T-cell (primary cell): ENCODE measurements at regions of chr3 and their contacts with region 1.

Region 1: GRCh38 chr3:43162230-43163084 is 56.6 kb upstream of the POMGNT2 start:
- DNase-seq: peak; percentile 44 to 78 (median 55)
- ATAC-seq: peak; percentile 89 to 95 (median 89)
- H3K4me3 ChIP-seq: peak overlapping the region in 1 of 2 donors; percentile 29
- H3K4me3 Mint-ChIP-seq: peak overlapping the region; percentile 57 to 79 (median 76)
- H3K27ac ChIP-seq: peak overlapping the region; percentile 93
- H3K27ac Mint-ChIP-seq: peak overlapping the region; percentile 98 to 99
- H3K4me1 ChIP-seq: peaks cover 18 to 28% of the 10 kb centered on the region in 2 experiments
- H3K4me1 Mint-ChIP-seq: peaks cover 29 to 35% (median 30%) of the 10 kb centered on the region in 3 donors
- H3K27me3 ChIP-seq: no peaks in the 10 kb centered on the region
- H3K27me3 Mint-ChIP-seq: no peaks in the 10 kb centered on the region

Region 2: DNA sequence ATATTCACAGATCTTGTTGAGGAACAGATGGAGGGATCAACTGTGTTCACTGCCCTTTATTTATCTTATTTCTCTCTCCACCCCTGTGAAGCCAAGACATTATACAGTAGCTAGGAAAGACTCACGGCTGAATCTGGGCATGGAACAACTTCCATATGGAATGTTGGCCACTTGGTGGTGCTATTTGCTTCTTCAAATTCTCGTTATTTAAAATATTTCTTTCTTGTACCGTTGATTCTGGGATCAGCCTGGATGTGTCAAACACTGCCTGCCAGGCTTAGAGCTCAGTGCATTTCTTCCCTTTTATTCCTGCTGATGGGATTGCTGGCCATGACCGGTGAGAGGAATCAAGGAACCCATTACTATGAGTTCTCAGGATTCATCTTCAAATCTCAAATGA is 200.8 kb before region 1 on chr3:
- CTCF ChIA-PET with region 1: interaction called, 3 to 11 read pairs
- POLR2A ChIA-PET with region 1: no interaction called
- DNase-seq: peak in 20 of 35 experiments; percentile 4 to 65 (median 15)
- ATAC-seq: peak in 1 of 4 experiments; percentile 32
- H3K4me3 ChIP-seq: no peak overlapping the region
- H3K4me3 Mint-ChIP-seq: no peak overlapping the region
- H3K27ac ChIP-seq: no peak overlapping the region
- H3K27ac Mint-ChIP-seq: no peak overlapping the region
- H3K4me1 ChIP-seq: peaks cover 4 to 24% of the 10 kb centered on the region in 2 experiments
- H3K4me1 Mint-ChIP-seq: peaks cover 28 to 31% (median 31%) of the 10 kb centered on the region in 3 donors
- H3K27me3 ChIP-seq: no peaks in the 10 kb centered on the region
- H3K27me3 Mint-ChIP-seq: peaks cover 0 to 6% of the 10 kb centered on the region in 2 donors

Region 3: GRCh38 chr3:43180027-43180426 is 17.6 kb after region 1 on chr3:
- CTCF ChIA-PET with region 1: interaction called, 6 to 24 read pairs
- POLR2A ChIA-PET with region 1: interaction called in 1 of 2 experiments, 4 read pairs
- DNase-seq: peak in 34 of 35 experiments; percentile 11 to 71 (median 34)
- ATAC-seq: peak; percentile 83 to 97 (median 88)
- H3K4me3 ChIP-seq: peak overlapping the region in 1 of 2 donors; percentile 40
- H3K4me3 Mint-ChIP-seq: peak overlapping the region; percentile 59 to 81 (median 66)
- H3K27ac ChIP-seq: peak overlapping the region; percentile 91
- H3K27ac Mint-ChIP-seq: peak overlapping the region; percentile 88 to 90
- H3K4me1 ChIP-seq: peaks cover 35 to 53% of the 10 kb centered on the region in 2 experiments
- H3K4me1 Mint-ChIP-seq: peaks cover 66 to 71% (median 69%) of the 10 kb centered on the region in 3 donors
- H3K27me3 ChIP-seq: no peaks in the 10 kb centered on the region
- H3K27me3 Mint-ChIP-seq: no peaks in the 10 kb centered on the region

Region 4: GRCh38 chr3:43223670-43224364 is 61.4 kb after region 1 on chr3:
- CTCF ChIA-PET with region 1: interaction called, 3 to 17 read pairs
- POLR2A ChIA-PET with region 1: no interaction called
- DNase-seq: peak in 1 of 35 experiments; percentile 52
- ATAC-seq: no peak
- H3K4me3 ChIP-seq: no peak overlapping the region
- H3K4me3 Mint-ChIP-seq: peak overlapping the region in 1 of 3 donors; percentile 57
- H3K27ac ChIP-seq: no peak overlapping the region
- H3K27ac Mint-ChIP-seq: peak overlapping the region; percentile 42 to 81
- H3K4me1 ChIP-seq: peaks cover 23 to 43% of the 10 kb centered on the region in 2 experiments
- H3K4me1 Mint-ChIP-seq: peaks cover 59 to 65% (median 60%) of the 10 kb centered on the region in 3 donors
- H3K27me3 ChIP-seq: no peaks in the 10 kb centered on the region
- H3K27me3 Mint-ChIP-seq: no peaks in the 10 kb centered on the region

Region 5: DNA sequence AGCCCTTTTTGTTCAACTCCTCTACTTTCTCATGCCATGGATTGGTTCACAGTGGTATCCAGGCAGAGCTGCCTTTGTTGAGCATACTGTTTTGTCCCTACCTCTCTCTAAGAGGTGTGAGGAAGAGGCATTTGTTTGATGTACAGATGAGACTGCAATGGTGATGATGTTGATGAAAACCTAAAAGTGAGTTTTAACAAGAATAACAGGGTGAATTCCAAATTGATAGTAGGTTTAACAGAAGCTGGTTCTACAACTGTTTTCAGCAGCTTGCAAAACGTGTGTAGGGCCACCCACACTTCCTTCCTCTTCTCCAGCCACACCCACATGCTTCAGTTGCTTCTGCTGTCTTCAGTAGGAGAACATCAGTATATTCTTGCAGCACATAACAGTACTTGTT is 134.1 kb after region 1 on chr3:
- CTCF ChIA-PET with region 1: interaction called in 1 of 2 experiments, 23 read pairs
- POLR2A ChIA-PET with region 1: interaction called in 1 of 2 experiments, 3 read pairs
- DNase-seq: peak in 34 of 35 experiments; percentile 33 to 91 (median 75)
- ATAC-seq: peak; percentile 90 to 97 (median 94)
- H3K4me3 ChIP-seq: peak overlapping the region in 1 of 2 donors; percentile 27
- H3K4me3 Mint-ChIP-seq: peak overlapping the region; percentile 80 to 91 (median 86)
- H3K27ac ChIP-seq: peak overlapping the region; percentile 88
- H3K27ac Mint-ChIP-seq: peak overlapping the region; percentile 96 to 99
- H3K4me1 ChIP-seq: peaks cover 52 to 84% of the 10 kb centered on the region in 2 experiments
- H3K4me1 Mint-ChIP-seq: peaks cover 85 to 91% (median 86%) of the 10 kb centered on the region in 3 donors
- H3K27me3 ChIP-seq: no peaks in the 10 kb centered on the region
- H3K27me3 Mint-ChIP-seq: no peaks in the 10 kb centered on the region

Region 6: DNA sequence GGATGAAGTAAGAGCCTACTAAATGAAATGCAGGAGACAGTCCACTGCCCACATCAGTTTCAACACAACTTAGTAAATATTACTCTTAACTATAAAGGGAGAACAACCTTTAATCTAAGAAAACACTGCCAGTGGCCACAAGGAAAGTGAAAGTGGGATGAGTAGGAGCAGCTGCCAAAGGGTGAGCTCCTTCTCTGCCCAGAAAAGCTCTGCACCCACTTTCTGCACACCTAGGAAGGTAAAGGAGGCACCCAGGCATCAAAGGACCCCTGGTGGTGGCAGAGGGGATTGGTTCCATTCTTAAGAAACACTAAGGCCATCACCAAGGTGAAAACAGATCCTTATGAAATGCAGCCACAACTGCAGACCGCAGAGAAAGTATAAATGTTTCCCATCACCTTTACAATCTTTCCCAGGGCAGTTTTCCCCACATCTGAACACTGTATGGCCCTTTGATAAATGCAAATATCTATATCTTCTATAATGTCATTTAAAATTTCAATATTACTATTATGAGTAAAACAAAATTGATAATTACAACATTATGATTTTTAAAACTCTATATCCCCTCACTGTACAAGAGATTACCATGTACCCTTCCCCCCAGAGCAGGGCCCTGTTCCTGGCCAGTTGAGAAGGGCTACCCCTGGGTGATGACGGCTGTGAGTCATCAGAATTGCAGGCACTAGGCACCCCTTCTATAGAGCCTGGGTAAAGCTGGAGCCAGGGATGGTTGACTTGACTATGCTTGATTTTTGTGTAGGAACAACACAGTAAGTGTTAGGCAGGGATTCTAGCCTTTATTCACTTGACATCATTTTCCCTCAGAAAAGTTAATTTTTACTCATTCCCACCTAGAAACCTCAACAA is 215.8 kb after region 1 on chr3:
- CTCF ChIA-PET with region 1: interaction called in 1 of 2 experiments, 24 read pairs
- POLR2A ChIA-PET with region 1: no interaction called
- DNase-seq: peak; percentile 48 to 86 (median 70)
- ATAC-seq: peak; percentile 92 to 98 (median 96)
- H3K4me3 ChIP-seq: no peak overlapping the region
- H3K4me3 Mint-ChIP-seq: no peak overlapping the region
- H3K27ac ChIP-seq: no peak overlapping the region
- H3K27ac Mint-ChIP-seq: peak overlapping the region; percentile 57 to 63
- H3K4me1 ChIP-seq: peaks cover 3 to 15% of the 10 kb centered on the region in 2 experiments
- H3K4me1 Mint-ChIP-seq: peaks cover 17 to 20% (median 17%) of the 10 kb centered on the region in 3 donors
- H3K27me3 ChIP-seq: no peaks in the 10 kb centered on the region
- H3K27me3 Mint-ChIP-seq: no peaks in the 10 kb centered on the region

Region 7: GRCh38 chr3:43503067-43503728 is 340.7 kb after region 1 on chr3:
- CTCF ChIA-PET with region 1: interaction called, 5 to 51 read pairs
- POLR2A ChIA-PET with region 1: no interaction called
- DNase-seq: peak in 1 of 35 experiments; percentile 68
- ATAC-seq: peak; percentile 57 to 60 (median 58)
- H3K4me3 ChIP-seq: no peak overlapping the region
- H3K4me3 Mint-ChIP-seq: no peak overlapping the region
- H3K27ac ChIP-seq: no peak overlapping the region
- H3K27ac Mint-ChIP-seq: peak overlapping the region in 1 of 2 donors; percentile 56
- H3K4me1 ChIP-seq: peaks cover 13 to 31% of the 10 kb centered on the region in 2 experiments
- H3K4me1 Mint-ChIP-seq: peaks cover 48 to 56% (median 54%) of the 10 kb centered on the region in 3 donors
- H3K27me3 ChIP-seq: no peaks in the 10 kb centered on the region
- H3K27me3 Mint-ChIP-seq: no peaks in the 10 kb centered on the region